Heart left ventricle (tissue), 16 donors: ENCODE measurements at regions of chr20 and their contacts with region 1.

Region 1: DNA sequence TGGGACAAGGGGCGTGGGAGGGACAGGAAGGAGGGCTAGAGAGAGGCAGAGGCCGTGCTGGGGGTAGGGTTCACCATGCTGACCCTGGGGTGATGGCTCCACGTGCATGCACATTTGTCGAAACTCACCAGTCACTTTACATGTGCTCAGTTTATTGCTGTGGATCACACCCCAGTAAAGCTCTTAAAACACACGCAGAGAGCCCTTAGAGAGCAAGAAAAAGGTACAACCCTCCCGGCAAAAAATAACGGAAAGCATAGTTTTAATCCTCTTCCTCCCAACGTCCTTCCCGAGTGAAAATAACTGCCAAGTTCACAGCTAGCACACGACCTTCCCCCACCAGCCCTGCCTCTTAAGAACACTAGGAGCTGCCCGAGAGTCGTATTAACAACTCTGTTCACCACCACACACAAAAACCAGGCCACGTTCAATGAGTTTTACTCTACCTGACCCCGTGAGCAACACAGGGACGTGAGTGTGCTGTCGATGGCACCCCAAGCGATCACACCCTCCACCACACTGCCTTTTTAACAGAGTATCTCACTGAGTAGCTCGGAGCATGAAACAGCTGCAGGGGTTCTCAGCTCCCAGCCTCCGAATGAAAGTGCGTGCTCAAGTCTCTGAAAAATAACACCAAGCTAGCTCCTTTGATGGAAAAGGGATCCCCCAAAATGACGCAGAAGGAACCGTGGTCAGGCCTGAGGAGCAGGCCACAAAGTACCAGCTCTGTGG is 39.7 kb downstream of the TAF4 start:
- DNase-seq: peak in 4 of 5 donors; percentile 39 to 54 (median 44)
- ATAC-seq: peak; percentile 60 to 87 (median 74)
- H3K4me3 ChIP-seq: peak overlapping the region in 1 of 12 donors; percentile 13
- H3K27ac ChIP-seq: peak overlapping the region in 6 of 12 donors; percentile 10 to 47 (median 20)
- H3K4me1 ChIP-seq: peaks cover 8 to 50% (median 30%) of the 10 kb centered on the region in 12 donors
- H3K27me3 ChIP-seq: no peaks in the 10 kb centered on the region
- CTCF ChIP-seq: peak; percentile 29 to 75 (median 64)
- POLR2A ChIP-seq: no peak

Region 2: GRCh38 chr20:61912665-61913422 is 113.2 kb before region 1 on chr20:
- intact Hi-C with region 1: no loop called
- DNase-seq: peak in 1 of 5 donors; percentile 44
- ATAC-seq: no peak
- H3K4me3 ChIP-seq: no peak overlapping the region
- H3K27ac ChIP-seq: no peak overlapping the region
- H3K4me1 ChIP-seq: no peaks in the 10 kb centered on the region
- H3K27me3 ChIP-seq: peaks cover 0 to 22% (median 0%) of the 10 kb centered on the region in 9 donors
- CTCF ChIP-seq: no peak
- POLR2A ChIP-seq: no peak

Region 3: DNA sequence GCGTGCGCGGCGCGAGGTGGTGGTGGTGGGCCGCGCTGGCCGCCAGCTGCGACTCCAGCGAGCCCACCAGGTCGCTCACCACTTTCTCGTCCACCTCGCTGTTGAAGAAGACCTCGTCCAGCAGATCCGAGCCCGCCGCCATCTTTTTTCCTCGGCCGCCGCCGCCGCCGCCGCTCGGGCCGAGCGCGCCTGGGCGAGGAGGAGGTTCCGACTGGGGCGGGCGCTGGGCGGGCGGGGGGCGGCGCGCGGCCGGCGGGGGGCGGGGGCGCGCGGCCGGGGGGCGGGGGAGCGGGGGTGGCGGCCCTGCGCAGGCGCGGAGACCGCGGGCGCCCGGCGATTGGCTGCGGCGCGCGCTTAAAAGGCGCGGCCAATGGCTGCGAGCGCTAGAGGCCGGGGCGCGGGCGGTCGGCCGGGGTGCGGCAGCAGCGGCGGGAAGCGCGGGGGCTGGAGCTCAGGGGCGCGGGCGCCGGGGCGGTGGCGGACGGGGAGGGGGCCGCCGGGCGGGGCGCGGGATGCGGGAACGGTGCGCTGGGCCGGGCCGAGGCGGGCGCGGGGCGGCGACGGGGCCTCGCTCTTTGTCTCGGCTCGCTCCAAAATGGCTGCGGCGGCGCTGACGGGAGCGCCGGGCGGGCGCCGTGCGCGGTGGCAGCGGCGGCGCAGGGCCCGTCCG is 39.8 kb after region 1 on chr20 and contains the start of gene TAF4:
- intact Hi-C with region 1: loop called in 5 of 10 experiments (anchors 5 kb)
- DNase-seq: peak; percentile 73 to 89 (median 81)
- ATAC-seq: peak; percentile 54 to 65 (median 58)
- H3K4me3 ChIP-seq: peak within 1 kb of the TSS; percentile 60 to 87 (median 70)
- H3K27ac ChIP-seq: peak within 1 kb of the TSS; percentile 74 to 94 (median 89)
- H3K4me1 ChIP-seq: peaks cover 2 to 41% (median 30%) of the 10 kb centered on the region in 12 donors
- H3K27me3 ChIP-seq: no peaks in the 10 kb centered on the region
- CTCF ChIP-seq: no peak
- POLR2A ChIP-seq: peak in 1 of 2 donors; percentile 85
- total RNA-seq, gene TAF4: 7.8 to 37.7 (median 11.4) TPM

Region 4: GRCh38 chr20:62121776-62122631 is 96.0 kb after region 1 on chr20 and contains the start of gene LSM14B:
- intact Hi-C with region 1: loop called in 3 of 10 experiments (anchors 5 kb)
- DNase-seq: peak; percentile 97 to 98 (median 97)
- ATAC-seq: peak; percentile 83 to 92 (median 88)
- H3K4me3 ChIP-seq: peak within 1 kb of the TSS; percentile 63 to 96 (median 82)
- H3K27ac ChIP-seq: peak within 1 kb of the TSS; percentile 89 to 99 (median 98)
- H3K4me1 ChIP-seq: peaks cover 3 to 59% (median 37%) of the 10 kb centered on the region in 12 donors
- H3K27me3 ChIP-seq: peaks cover 0 to 8% (median 0%) of the 10 kb centered on the region in 9 donors
- CTCF ChIP-seq: no peak
- POLR2A ChIP-seq: peak in 1 of 2 donors; percentile 28
- total RNA-seq, gene LSM14B: 38.6 to 64.7 (median 54.6) TPM

Region 5: DNA sequence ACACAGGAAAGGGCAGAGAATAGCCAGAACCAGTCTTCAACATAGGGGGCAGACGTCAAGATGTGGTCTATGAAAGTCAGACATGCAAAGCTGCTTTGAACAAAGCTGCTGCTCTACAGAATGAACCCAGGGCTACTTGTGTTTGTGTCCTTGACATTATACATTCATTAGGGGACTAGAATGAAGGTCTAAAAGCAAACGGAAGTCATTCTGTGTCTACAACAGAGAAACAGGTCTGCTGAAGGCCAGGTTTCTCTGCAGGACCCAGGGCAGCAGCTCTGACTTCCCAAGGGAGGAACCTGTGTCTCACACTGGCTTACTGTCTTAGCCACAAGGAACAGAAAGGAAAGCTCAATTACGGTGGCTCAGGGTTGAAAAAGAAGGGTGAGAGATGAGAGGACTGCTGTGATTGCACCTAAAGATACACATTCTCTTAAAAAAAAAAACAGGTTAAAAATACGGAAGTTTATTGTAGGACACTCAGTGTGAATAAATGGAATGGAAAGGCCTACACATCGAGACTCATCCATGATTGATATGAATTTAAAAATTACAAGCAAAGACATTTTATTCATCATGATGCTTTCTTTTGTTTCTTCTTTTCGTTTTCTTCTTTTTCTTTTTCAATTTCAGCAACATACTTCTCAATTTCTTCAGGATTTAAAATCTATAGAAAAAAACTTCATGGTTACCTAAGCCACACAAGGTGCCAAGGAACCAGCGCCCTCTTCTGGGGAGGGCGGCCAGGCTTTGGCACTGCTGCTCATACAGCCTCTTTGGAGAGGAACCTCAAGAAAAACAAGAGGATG is 110.5 kb after region 1 on chr20:
- intact Hi-C with region 1: loop called in 8 of 10 experiments (anchors 5 kb)
- DNase-seq: peak in 3 of 5 donors; percentile 57 to 71 (median 61)
- ATAC-seq: peak in 3 of 4 donors; percentile 20 to 45 (median 37)
- H3K4me3 ChIP-seq: no peak overlapping the region
- H3K27ac ChIP-seq: no peak overlapping the region
- H3K4me1 ChIP-seq: peaks cover 7 to 59% (median 44%) of the 10 kb centered on the region in 12 donors
- H3K27me3 ChIP-seq: no peaks in the 10 kb centered on the region
- CTCF ChIP-seq: peak; percentile 64 to 90 (median 78)
- POLR2A ChIP-seq: no peak

Region 6: DNA sequence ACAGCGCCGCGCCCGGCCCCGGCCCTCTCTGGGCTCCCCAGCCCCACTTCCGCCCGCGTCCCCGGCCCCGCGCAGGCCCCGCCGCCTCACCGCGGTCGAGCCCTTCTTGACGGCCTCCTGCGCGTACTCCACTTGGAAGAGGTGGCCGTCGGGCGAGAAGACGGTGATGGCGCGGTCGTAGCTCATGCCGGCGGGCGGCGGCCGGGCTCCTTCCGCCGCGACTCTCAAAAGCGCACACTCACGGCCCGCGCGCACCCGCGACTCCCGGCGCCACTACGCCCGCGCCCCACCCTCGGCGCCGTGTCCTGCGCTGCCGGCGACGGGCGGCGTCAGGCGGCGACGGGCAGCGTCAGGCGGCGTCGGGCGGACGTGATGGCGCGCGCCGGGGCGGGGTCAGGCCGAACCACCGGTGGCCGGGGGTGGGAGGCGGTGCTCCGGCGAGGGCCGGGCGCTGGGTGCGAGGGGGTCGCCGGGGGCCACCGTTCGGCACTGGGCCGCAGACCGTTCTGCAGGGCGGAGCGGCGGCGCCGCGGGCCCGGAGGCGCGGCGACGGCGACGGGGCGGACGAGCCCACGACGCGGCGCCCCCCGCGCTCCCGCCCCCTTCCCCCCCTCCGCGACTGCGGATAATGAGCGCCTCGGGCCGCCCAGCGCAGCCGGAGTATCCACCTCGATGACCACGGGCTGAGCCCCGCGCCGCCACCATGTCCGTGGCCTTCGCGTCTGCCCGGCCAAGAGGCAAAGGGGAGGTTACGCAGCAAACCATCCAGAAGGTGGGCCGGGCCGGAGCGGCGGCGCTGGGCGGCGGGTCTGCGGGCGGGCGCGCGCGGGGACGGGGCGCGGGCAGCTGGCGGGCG is 117.3 kb after region 1 on chr20 and contains the starts of genes PSMA7 and SS18L1:
- intact Hi-C with region 1: loop called in 7 of 10 experiments (anchors 5 kb)
- DNase-seq: peak; percentile 87 to 94 (median 91)
- ATAC-seq: peak; percentile 76 to 94 (median 92)
- H3K4me3 ChIP-seq: peak within 1 kb of the TSS; percentile 75 to 100 (median 88)
- H3K27ac ChIP-seq: peak within 1 kb of the TSS; percentile 89 to 100 (median 98)
- H3K4me1 ChIP-seq: peaks cover 6 to 41% (median 30%) of the 10 kb centered on the region in 12 donors
- H3K27me3 ChIP-seq: no peaks in the 10 kb centered on the region
- CTCF ChIP-seq: no peak
- POLR2A ChIP-seq: peak; percentile 87 to 96
- total RNA-seq, gene PSMA7: 172 to 432 (median 233) TPM
- total RNA-seq, gene SS18L1: 6.5 to 12.4 (median 8.6) TPM

Region 7: GRCh38 chr20:62156592-62157386 is 130.8 kb after region 1 on chr20:
- intact Hi-C with region 1: loop called in 1 of 10 experiments (anchors 5 kb)
- DNase-seq: peak; percentile 59 to 79 (median 72)
- ATAC-seq: peak; percentile 63 to 88 (median 84)
- H3K4me3 ChIP-seq: no peak overlapping the region
- H3K27ac ChIP-seq: no peak overlapping the region
- H3K4me1 ChIP-seq: peaks cover 0 to 16% (median 9%) of the 10 kb centered on the region in 12 donors
- H3K27me3 ChIP-seq: no peaks in the 10 kb centered on the region
- CTCF ChIP-seq: peak; percentile 63 to 81 (median 69)
- POLR2A ChIP-seq: no peak

Region 8: GRCh38 chr20:62285722-62286121 is 259.7 kb after region 1 on chr20:
- intact Hi-C with region 1: loop called in 1 of 10 experiments (anchors 10 kb)
- DNase-seq: peak in 4 of 5 donors; percentile 46 to 76 (median 66)
- ATAC-seq: peak in 3 of 4 donors; percentile 16 to 77 (median 35)
- H3K4me3 ChIP-seq: no peak overlapping the region
- H3K27ac ChIP-seq: peak overlapping the region in 11 of 12 donors; percentile 50 to 85 (median 79)
- H3K4me1 ChIP-seq: peaks cover 0 to 48% (median 33%) of the 10 kb centered on the region in 12 donors
- H3K27me3 ChIP-seq: no peaks in the 10 kb centered on the region
- CTCF ChIP-seq: no peak
- POLR2A ChIP-seq: no peak